Caco-2 (cell line): ENCODE measurements at regions of chr17 and their contacts with region 1.

Region 1: GRCh38 chr17:28612936-28613872 is 781 bp downstream of the RSKR start:
- DNase-seq: peak; percentile 50 to 66
- H3K4me3 ChIP-seq: no peak overlapping the region
- H3K4me3 Mint-ChIP-seq: no peak overlapping the region
- H3K27ac Mint-ChIP-seq: peak overlapping the region; percentile 19
- H3K4me1 ChIP-seq: no peaks in the 10 kb centered on the region
- H3K4me1 Mint-ChIP-seq: peaks cover 9% of the 10 kb centered on the region
- H3K27me3 ChIP-seq: no peaks in the 10 kb centered on the region
- H3K27me3 Mint-ChIP-seq: no peaks in the 10 kb centered on the region
- CTCF ChIP-seq: peak; percentile 73 to 80

Region 2: DNA sequence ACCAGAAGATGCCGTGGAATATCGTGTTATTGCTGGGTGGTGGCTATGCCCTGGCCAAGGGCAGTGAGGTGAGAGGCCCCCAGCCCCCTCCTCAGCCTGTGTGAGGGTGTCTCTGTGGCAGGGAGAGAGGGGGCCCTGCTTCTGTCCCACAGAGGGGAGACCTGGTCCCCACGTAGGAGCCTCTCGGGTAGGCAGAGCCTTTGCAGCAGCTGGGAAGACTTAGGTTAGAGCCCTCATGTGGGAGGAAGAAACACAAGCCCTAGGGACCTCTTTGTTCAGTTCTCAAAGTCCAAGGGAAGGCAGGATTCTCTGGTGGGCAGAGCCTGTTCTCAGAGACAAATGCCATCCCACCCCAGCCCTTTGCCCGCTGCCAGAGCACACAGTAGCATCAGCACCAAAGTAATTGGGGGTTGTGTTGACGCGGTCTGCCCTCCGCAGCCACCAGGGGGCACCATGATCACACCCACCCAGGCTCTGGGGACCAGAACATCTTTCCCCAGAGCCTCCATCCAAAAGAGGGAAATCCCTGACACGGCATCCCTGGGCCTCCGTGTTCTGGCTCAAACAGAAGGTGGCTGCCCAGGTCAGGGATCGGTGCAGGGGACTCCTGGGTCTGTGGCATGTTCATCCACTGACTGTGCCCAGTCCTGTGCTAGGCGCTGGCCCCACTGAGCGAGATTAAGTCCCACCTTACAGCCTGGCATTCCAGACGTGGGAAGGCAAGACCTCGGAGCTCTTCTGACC is 118.6 kb before region 1 on chr17:
- CTCF ChIA-PET with region 1: no interaction called
- POLR2A ChIA-PET with region 1: no interaction called
- intact Hi-C with region 1: loop called (anchors 1 kb)
- DNase-seq: peak; percentile 78 to 88
- H3K4me3 ChIP-seq: no peak overlapping the region
- H3K4me3 Mint-ChIP-seq: no peak overlapping the region
- H3K27ac Mint-ChIP-seq: no peak overlapping the region
- H3K4me1 ChIP-seq: peaks cover 6% of the 10 kb centered on the region; the same call in 1 of the 2 replicates
- H3K4me1 Mint-ChIP-seq: peaks cover 7% of the 10 kb centered on the region
- H3K27me3 ChIP-seq: no peaks in the 10 kb centered on the region
- H3K27me3 Mint-ChIP-seq: no peaks in the 10 kb centered on the region
- CTCF ChIP-seq: peak; percentile 92 to 97

Region 3: GRCh38 chr17:28567604-28568003 is 45.6 kb before region 1 on chr17:
- CTCF ChIA-PET with region 1: no interaction called
- POLR2A ChIA-PET with region 1: no interaction called
- intact Hi-C with region 1: no loop called
- DNase-seq: no peak
- H3K4me3 ChIP-seq: no peak overlapping the region
- H3K4me3 Mint-ChIP-seq: no peak overlapping the region
- H3K27ac Mint-ChIP-seq: no peak overlapping the region
- H3K4me1 ChIP-seq: peaks cover 25% of the 10 kb centered on the region
- H3K4me1 Mint-ChIP-seq: peaks cover 16% of the 10 kb centered on the region
- H3K27me3 ChIP-seq: no peaks in the 10 kb centered on the region
- H3K27me3 Mint-ChIP-seq: no peaks in the 10 kb centered on the region
- CTCF ChIP-seq: no peak

Region 4: GRCh38 chr17:28661635-28662537 is 48.7 kb after region 1 on chr17 and contains the starts of genes SDF2 and SUPT6H:
- CTCF ChIA-PET with region 1: no interaction called
- POLR2A ChIA-PET with region 1: no interaction called
- intact Hi-C with region 1: no loop called
- DNase-seq: peak; percentile 91 to 94
- H3K4me3 ChIP-seq: peak within 1 kb of the TSS; percentile 80
- H3K4me3 Mint-ChIP-seq: peak within 1 kb of the TSS; percentile 89
- H3K27ac Mint-ChIP-seq: peak within 1 kb of the TSS; percentile 95
- H3K4me1 ChIP-seq: peaks cover 14% of the 10 kb centered on the region; the same call in 1 of the 2 replicates
- H3K4me1 Mint-ChIP-seq: peaks cover 31% of the 10 kb centered on the region
- H3K27me3 ChIP-seq: no peaks in the 10 kb centered on the region
- H3K27me3 Mint-ChIP-seq: no peaks in the 10 kb centered on the region
- CTCF ChIP-seq: no peak
- total RNA-seq, gene SDF2: 63.5 and 64.9 TPM in 2 replicates
- total RNA-seq, gene SUPT6H: 127 and 129 TPM in 2 replicates